Right cardiac atrium (tissue), 5 donors: ENCODE measurements at regions of chr7 and their contacts with region 1.

Region 1: GRCh38 chr7:99551767-99552463 is at the start of gene FAM200A:
- DNase-seq: peak; percentile 92 to 96 (median 95)
- ATAC-seq: peak; percentile 99
- H3K4me3 ChIP-seq: peak within 1 kb of the TSS; percentile 92
- H3K27ac ChIP-seq: peak within 1 kb of the TSS; percentile 94
- H3K4me1 ChIP-seq: no peaks in the 10 kb centered on the region
- H3K27me3 ChIP-seq: no peaks in the 10 kb centered on the region
- total RNA-seq, gene FAM200A: 4.7 to 6.1 (median 5.5) TPM

Region 2: DNA sequence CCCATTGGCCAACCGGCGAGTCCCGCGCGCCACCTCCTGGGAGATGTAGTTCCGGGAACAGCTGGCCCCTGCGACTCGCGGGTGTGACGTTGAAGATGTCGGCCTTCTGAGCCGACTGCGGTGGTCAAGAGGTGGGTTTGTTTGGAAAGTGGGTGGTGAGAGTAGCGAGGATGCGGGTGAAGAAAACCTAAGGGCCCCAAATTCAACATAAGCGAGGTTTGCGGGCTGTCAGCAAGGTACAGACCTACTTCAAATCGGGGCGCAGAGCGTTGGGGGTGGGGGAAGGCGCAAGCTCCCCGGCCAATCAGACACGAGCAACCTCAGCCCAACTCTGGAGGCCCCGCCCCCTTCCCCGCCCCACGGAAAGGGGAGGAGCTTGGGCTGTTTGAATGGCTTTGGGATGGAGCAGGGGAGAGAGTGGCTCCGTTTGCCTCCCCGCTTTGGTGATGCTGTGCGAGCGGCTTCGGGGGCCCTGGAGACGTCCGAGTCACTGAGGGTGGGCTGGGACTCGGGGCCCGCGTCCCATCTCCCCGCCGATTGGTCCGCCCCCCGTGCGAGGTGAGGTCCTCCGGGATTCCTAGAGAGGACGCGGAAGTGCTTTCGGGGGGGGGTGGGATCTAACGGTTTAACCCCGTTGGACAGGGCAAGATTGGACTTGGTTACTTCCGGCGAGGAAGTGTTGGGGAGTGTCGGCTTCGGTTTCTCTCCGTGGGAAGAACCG is 47.2 kb before region 1 on chr7 and contains the start of gene ZKSCAN5:
- intact Hi-C with region 1: loop called in 1 of 4 experiments (anchors 10 kb)
- DNase-seq: peak; percentile 99 to 100 (median 99)
- ATAC-seq: peak; percentile 96
- H3K4me3 ChIP-seq: peak within 1 kb of the TSS; percentile 83
- H3K27ac ChIP-seq: peak within 1 kb of the TSS; percentile 96
- H3K4me1 ChIP-seq: peaks cover 6% of the 10 kb centered on the region
- H3K27me3 ChIP-seq: no peaks in the 10 kb centered on the region
- total RNA-seq, gene ZKSCAN5: 6.1 to 7.1 (median 6.3) TPM

Region 3: GRCh38 chr7:99624484-99624883 is 72.6 kb after region 1 on chr7:
- intact Hi-C with region 1: no loop called
- DNase-seq: no peak
- ATAC-seq: peak in 1 of 2 donors; percentile 14
- H3K4me3 ChIP-seq: no peak overlapping the region
- H3K27ac ChIP-seq: no peak overlapping the region
- H3K4me1 ChIP-seq: no peaks in the 10 kb centered on the region
- H3K27me3 ChIP-seq: no peaks in the 10 kb centered on the region